Activated CD4-positive, alpha-beta T cell treated with anti-CD3 and anti-CD28 coated beads for 36 hours (primary cell): ENCODE measurements at regions of chr5 and their contacts with region 1.

Region 1: DNA sequence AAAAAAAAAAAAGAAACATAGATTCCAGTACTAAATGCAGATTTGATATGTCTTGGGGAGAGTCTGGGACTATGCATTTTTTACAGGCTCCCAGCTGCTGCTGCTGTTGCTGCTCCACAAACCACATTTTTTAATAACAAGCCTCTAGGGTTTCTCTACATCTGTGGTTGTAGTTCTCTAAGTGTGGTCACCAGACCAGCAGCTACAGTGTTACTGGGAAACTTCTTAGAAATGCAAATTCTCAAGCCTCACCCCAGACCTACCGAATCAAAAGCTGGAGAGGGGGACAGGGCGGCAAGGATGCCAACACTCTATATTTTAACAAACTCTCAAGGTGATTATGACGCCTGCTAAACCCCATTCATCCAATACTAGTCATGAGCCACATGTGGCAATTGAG is 293.4 kb upstream of the PTGER4 start:
- DNase-seq: peak; percentile 39
- ATAC-seq: peak; percentile 11
- H3K4me3 Mint-ChIP-seq: no peak overlapping the region
- H3K27ac Mint-ChIP-seq: peak overlapping the region; percentile 92
- H3K4me1 Mint-ChIP-seq: peaks cover 86% of the 10 kb centered on the region
- H3K27me3 Mint-ChIP-seq: no peaks in the 10 kb centered on the region

Region 2: GRCh38 chr5:39906146-39906545 is 480.1 kb before region 1 on chr5:
- CTCF ChIA-PET with region 1: no interaction called
- POLR2A ChIA-PET with region 1: no interaction called
- intact Hi-C with region 1: no loop called
- DNase-seq: no peak
- ATAC-seq: no peak
- H3K4me3 Mint-ChIP-seq: no peak overlapping the region
- H3K27ac Mint-ChIP-seq: no peak overlapping the region
- H3K4me1 Mint-ChIP-seq: no peaks in the 10 kb centered on the region
- H3K27me3 Mint-ChIP-seq: peaks cover 17% of the 10 kb centered on the region

Region 3: GRCh38 chr5:39948867-39949468 is 437.3 kb before region 1 on chr5:
- CTCF ChIA-PET with region 1: interaction called, 4 read pairs
- POLR2A ChIA-PET with region 1: no interaction called
- intact Hi-C with region 1: loop called (anchors 2 to 5 kb)
- DNase-seq: peak; percentile 70
- ATAC-seq: peak; percentile 97
- H3K4me3 Mint-ChIP-seq: no peak overlapping the region
- H3K27ac Mint-ChIP-seq: no peak overlapping the region
- H3K4me1 Mint-ChIP-seq: peaks cover 5% of the 10 kb centered on the region
- H3K27me3 Mint-ChIP-seq: no peaks in the 10 kb centered on the region

Region 4: DNA sequence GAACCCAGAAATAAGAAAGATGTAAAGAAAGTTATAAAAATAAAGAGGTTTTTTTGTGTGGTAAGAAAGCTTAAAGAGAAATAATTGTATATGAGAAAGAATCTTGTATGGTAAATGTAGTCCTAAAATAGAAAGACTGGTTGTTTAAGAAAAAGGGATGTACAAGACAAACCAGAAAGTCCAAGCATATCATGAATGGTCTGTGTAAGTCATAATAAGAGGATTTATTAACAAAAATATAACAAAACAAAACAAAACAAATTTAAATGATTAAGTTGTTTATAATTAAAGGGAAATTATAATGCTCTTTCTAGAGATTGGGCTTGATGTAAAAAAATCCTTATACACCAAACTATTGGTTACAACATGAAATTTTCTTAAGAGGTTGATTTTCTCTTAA is 297.0 kb before region 1 on chr5:
- CTCF ChIA-PET with region 1: no interaction called
- POLR2A ChIA-PET with region 1: no interaction called
- intact Hi-C with region 1: no loop called
- DNase-seq: no peak
- ATAC-seq: no peak
- H3K4me3 Mint-ChIP-seq: no peak overlapping the region
- H3K27ac Mint-ChIP-seq: no peak overlapping the region
- H3K4me1 Mint-ChIP-seq: peaks cover 2% of the 10 kb centered on the region
- H3K27me3 Mint-ChIP-seq: no peaks in the 10 kb centered on the region

Region 5: DNA sequence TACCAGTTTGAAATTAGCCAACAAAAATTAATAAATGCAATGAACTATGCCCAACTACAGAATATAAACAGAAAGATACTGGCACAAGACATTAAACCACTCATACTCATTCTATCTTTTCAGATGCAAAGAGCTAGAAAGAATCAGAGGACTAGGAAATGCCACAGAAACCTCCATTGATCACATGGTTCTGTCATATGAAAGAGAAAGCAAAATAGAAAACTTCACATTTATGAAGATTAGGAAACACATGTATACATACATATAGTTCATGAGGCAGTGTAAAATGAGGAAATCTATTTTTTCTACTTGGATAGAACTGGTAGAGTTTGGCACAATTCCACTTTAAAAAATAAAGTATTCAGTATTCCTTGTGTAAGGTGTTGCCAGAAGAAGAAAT is 18.3 kb after region 1 on chr5:
- CTCF ChIA-PET with region 1: interaction called, 23 read pairs
- POLR2A ChIA-PET with region 1: interaction called, 22 read pairs
- intact Hi-C with region 1: loop called (anchors 1 kb)
- DNase-seq: no peak
- ATAC-seq: peak; percentile 28
- H3K4me3 Mint-ChIP-seq: peak overlapping the region; percentile 18
- H3K27ac Mint-ChIP-seq: peak overlapping the region; percentile 99
- H3K4me1 Mint-ChIP-seq: peaks cover 94% of the 10 kb centered on the region
- H3K27me3 Mint-ChIP-seq: no peaks in the 10 kb centered on the region

Region 6: GRCh38 chr5:40437452-40437861 is 51.2 kb after region 1 on chr5:
- CTCF ChIA-PET with region 1: interaction called, 6 read pairs
- POLR2A ChIA-PET with region 1: no interaction called
- intact Hi-C with region 1: loop called (anchors 1 to 2 kb)
- DNase-seq: peak; percentile 55
- ATAC-seq: peak; percentile 61
- H3K4me3 Mint-ChIP-seq: no peak overlapping the region
- H3K27ac Mint-ChIP-seq: peak overlapping the region; percentile 61
- H3K4me1 Mint-ChIP-seq: peaks cover 80% of the 10 kb centered on the region
- H3K27me3 Mint-ChIP-seq: no peaks in the 10 kb centered on the region

Region 7: DNA sequence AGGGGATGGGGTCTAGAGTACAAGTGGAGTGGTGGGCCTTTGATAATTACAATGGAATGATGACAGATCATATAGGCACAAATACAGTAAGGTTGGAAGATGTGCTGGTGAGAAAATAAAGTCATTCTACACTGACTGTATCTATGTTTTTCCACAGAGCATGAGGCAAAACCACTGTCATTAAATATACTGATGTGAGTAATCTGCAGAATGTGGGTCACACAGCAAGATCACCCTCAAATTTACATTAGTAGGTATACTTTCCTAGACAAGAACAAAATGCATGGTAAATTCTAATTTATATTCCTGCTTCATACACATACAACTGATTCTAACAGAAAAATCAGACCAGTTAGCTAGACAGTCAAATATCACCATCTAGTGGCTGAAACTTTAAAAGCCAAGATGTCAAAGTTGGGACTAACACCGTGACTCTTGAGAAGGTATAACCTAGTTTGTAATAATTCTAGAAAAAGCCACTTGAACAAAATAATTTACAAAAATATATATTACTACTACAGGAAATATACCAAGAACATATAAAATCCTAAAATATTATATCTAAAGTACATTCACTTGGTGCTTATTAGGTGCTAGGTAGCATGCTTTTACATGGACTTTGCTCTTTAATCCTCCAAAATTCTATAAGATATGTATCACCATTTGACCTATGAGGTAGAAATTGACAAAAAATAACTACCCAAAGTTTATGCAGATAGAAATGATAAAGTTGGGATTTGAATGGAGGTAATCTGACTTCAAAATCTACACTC is 350.0 kb after region 1 on chr5:
- CTCF ChIA-PET with region 1: no interaction called
- POLR2A ChIA-PET with region 1: no interaction called
- intact Hi-C with region 1: loop called (anchors 5 kb)
- DNase-seq: no peak
- ATAC-seq: peak; percentile 72
- H3K4me3 Mint-ChIP-seq: no peak overlapping the region
- H3K27ac Mint-ChIP-seq: peak overlapping the region; percentile 69
- H3K4me1 Mint-ChIP-seq: peaks cover 22% of the 10 kb centered on the region
- H3K27me3 Mint-ChIP-seq: no peaks in the 10 kb centered on the region